Natural killer cell (primary cell): ENCODE measurements at regions of chr3 and their contacts with region 1.

Region 1: GRCh38 chr3:128617557-128618397 is 32.8 kb downstream of the RPN1 start:
- DNase-seq: peak; percentile 99 to 100
- ATAC-seq: peak; percentile 91 to 97 (median 93)
- H3K4me3 ChIP-seq: peak overlapping the region; percentile 90
- H3K4me3 Mint-ChIP-seq: peak overlapping the region; percentile 98
- H3K27ac ChIP-seq: peak overlapping the region; percentile 93
- H3K27ac Mint-ChIP-seq: peak overlapping the region; percentile 91 to 97
- H3K4me1 ChIP-seq: peaks cover 22% of the 10 kb centered on the region
- H3K4me1 Mint-ChIP-seq: peaks cover 25 to 49% of the 10 kb centered on the region in 2 donors
- H3K27me3 ChIP-seq: no peaks in the 10 kb centered on the region
- H3K27me3 Mint-ChIP-seq: no peaks in the 10 kb centered on the region
- CTCF ChIP-seq: peak; percentile 99

Region 2: GRCh38 chr3:127628788-127629466 is 988.9 kb before region 1 on chr3 and contains the start of gene PODXL2:
- intact Hi-C with region 1: no loop called
- DNase-seq: peak; percentile 51 to 71
- ATAC-seq: peak; percentile 56 to 66 (median 66)
- H3K4me3 ChIP-seq: peak within 1 kb of the TSS; percentile 36
- H3K4me3 Mint-ChIP-seq: peak within 1 kb of the TSS; percentile 93
- H3K27ac ChIP-seq: no peak within 1 kb of the TSS
- H3K27ac Mint-ChIP-seq: peak within 1 kb of the TSS; percentile 73 to 87
- H3K4me1 ChIP-seq: peaks cover 29% of the 10 kb centered on the region
- H3K4me1 Mint-ChIP-seq: peaks cover 49 to 61% of the 10 kb centered on the region in 2 donors
- H3K27me3 ChIP-seq: peaks cover 2% of the 10 kb centered on the region
- H3K27me3 Mint-ChIP-seq: peaks cover 17 to 24% of the 10 kb centered on the region in 2 donors
- CTCF ChIP-seq: no peak
- total RNA-seq, gene PODXL2: 2.2 to 3.5 (median 2.7) TPM

Region 3: DNA sequence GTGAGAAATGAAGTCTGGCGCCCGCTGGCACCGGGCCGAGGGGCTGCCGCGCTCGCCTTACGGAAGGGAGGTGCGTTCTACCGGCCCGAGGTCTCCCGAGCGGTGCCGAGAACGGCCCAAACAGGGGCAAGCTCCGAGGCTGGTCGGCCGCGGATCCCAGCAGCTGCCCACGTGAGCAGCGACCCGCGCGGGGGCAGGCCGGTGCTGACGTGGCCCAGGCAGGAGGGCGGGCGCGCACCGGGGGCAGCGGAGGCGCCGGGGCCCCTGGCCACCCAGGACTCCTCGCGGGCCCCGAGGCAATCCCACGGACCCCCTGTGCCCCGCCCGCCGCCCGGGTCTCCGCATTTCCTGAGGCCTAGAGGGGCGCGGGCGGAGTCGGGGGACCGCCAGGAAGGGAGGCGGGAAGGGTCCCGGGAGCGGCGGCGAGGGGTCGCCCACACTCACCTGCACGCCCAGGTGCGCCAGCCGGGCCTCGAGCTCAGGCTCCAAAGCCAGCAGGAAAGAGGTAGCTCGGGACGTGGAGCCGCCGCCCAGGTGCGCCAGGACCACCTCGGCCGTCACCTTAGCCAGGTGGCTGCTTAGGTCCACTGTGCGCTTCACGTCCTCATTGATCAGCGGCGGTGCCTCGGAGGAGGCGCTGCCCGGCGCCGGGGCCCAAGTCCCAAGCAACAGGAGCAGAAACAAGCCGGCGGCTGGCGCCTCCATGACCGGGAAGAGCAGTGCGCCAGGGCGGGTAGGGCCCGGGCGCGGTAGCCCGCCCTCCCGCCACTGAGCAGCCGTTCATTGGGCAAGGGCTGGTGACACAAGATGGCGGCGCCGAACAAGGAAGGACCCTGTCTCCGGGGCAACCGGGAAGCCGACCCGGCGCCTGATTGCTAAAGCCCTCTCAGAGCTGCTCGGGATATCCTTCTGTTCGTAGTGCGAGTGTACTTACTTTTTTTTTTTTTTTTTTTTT is 32.6 kb after region 1 on chr3 and contains the start of gene RPN1:
- intact Hi-C with region 1: loop called (anchors 2 kb)
- DNase-seq: peak; percentile 92 to 97
- ATAC-seq: peak; percentile 94 to 99 (median 98)
- H3K4me3 ChIP-seq: peak within 1 kb of the TSS; percentile 100
- H3K4me3 Mint-ChIP-seq: peak within 1 kb of the TSS; percentile 92
- H3K27ac ChIP-seq: peak within 1 kb of the TSS; percentile 98
- H3K27ac Mint-ChIP-seq: peak within 1 kb of the TSS; percentile 86 to 92
- H3K4me1 ChIP-seq: peaks cover 15% of the 10 kb centered on the region
- H3K4me1 Mint-ChIP-seq: peaks cover 28 to 31% of the 10 kb centered on the region in 2 donors
- H3K27me3 ChIP-seq: no peaks in the 10 kb centered on the region
- H3K27me3 Mint-ChIP-seq: no peaks in the 10 kb centered on the region
- CTCF ChIP-seq: no peak
- total RNA-seq, gene RPN1: 90.5 to 130 (median 92.1) TPM

Region 4: DNA sequence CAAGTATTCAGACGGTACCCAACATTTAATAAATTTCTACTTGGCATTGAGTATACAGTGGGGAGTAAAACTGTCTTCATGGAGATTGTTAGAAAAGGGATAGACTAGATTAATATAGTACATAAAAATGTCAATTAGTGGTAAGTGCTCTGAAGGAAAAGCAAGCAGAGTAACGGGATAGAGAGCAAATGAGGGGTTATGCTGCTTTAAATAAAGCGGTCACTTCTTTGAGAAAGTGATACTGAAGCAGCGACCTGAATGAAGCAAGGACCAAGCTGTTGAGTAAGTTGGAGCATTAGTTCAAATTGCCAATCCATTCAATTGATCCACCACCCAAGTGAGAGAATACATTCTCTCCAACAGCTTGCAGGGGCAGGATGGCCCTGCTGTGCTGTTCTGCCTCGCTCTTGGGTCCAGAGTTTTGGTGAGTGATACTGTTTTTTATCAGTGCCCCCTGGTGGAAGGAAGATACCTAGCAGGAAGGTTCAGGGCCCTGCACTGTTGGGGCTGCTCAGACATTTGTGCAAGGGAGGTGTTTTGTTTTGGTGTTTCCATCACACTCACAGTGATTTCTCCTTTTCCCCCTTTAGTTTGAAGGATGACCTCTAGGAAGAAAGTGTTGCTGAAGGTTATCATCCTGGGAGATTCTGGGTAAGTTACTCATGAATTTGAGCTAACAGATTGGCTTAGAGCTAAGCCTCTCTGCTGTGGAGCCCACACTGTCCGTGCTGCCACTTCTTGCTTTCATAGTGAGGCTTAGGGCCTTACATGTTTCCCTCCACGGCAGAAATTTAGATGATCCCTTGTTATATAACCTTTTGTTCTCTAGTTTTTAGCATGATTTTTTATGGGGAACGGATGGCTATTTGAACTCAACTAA is 177.2 kb after region 1 on chr3:
- intact Hi-C with region 1: loop called (anchors 1 kb)
- DNase-seq: peak; percentile 47 to 87
- ATAC-seq: peak; percentile 98 to 100 (median 99)
- H3K4me3 ChIP-seq: no peak overlapping the region
- H3K4me3 Mint-ChIP-seq: no peak overlapping the region
- H3K27ac ChIP-seq: no peak overlapping the region
- H3K27ac Mint-ChIP-seq: peak overlapping the region; percentile 61 to 72
- H3K4me1 ChIP-seq: peaks cover 18% of the 10 kb centered on the region
- H3K4me1 Mint-ChIP-seq: peaks cover 22 to 45% of the 10 kb centered on the region in 2 donors
- H3K27me3 ChIP-seq: no peaks in the 10 kb centered on the region
- H3K27me3 Mint-ChIP-seq: no peaks in the 10 kb centered on the region
- CTCF ChIP-seq: peak; percentile 74

Region 5: DNA sequence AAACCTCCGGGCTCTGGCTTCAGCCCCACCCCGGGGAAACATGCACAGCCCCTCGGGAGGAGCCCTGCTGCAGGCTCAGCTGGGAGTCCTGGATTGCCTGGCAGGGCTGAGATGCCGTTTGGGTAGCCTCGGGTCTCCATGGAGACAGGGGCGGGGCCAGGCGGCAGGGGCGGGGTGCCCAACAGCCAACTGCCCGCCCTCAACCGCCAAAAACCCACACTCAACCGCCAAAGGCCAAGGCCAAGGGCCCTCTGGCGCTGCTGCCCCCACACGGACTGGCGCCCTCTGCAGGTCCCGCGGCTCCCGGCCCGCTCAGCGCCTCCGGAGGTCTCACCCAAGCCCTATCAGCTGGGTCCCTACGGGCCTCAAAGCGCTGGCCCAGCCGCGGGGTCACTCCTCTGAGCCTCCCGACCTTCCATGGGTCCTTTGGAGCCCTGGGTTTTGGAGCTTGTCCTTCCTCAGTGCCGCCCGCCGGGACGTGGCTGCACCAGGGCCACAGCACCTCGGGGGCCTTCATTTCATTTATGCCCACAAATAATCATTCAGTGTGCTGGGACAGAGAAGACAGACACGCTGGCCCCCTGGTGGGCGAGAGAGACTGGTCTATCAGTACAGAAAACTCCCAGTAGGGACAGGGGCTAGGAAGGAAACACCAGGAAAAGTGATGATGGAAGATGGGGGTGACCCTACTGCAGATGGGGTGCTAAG is 228.2 kb after region 1 on chr3:
- intact Hi-C with region 1: loop called (anchors 1 kb)
- DNase-seq: peak; percentile 73 to 83
- ATAC-seq: peak; percentile 85 to 91 (median 89)
- H3K4me3 ChIP-seq: peak overlapping the region; percentile 38
- H3K4me3 Mint-ChIP-seq: peak overlapping the region; percentile 92
- H3K27ac ChIP-seq: peak overlapping the region; percentile 12
- H3K27ac Mint-ChIP-seq: peak overlapping the region; percentile 62 to 72
- H3K4me1 ChIP-seq: peaks cover 17% of the 10 kb centered on the region
- H3K4me1 Mint-ChIP-seq: peaks cover 12 to 14% of the 10 kb centered on the region in 2 donors
- H3K27me3 ChIP-seq: no peaks in the 10 kb centered on the region
- H3K27me3 Mint-ChIP-seq: no peaks in the 10 kb centered on the region
- CTCF ChIP-seq: peak; percentile 76

Region 6: GRCh38 chr3:128879125-128879969 is 261.6 kb after region 1 on chr3 and contains the start of gene ACAD9:
- intact Hi-C with region 1: loop called (anchors 1 kb)
- DNase-seq: peak; percentile 98 to 99
- ATAC-seq: peak; percentile 90 to 97 (median 95)
- H3K4me3 ChIP-seq: peak within 1 kb of the TSS; percentile 74
- H3K4me3 Mint-ChIP-seq: peak within 1 kb of the TSS; percentile 81
- H3K27ac ChIP-seq: peak within 1 kb of the TSS; percentile 93
- H3K27ac Mint-ChIP-seq: peak within 1 kb of the TSS; percentile 90 to 92
- H3K4me1 ChIP-seq: peaks cover 25% of the 10 kb centered on the region
- H3K4me1 Mint-ChIP-seq: peaks cover 56 to 61% of the 10 kb centered on the region in 2 donors
- H3K27me3 ChIP-seq: no peaks in the 10 kb centered on the region
- H3K27me3 Mint-ChIP-seq: peaks cover 3 to 4% of the 10 kb centered on the region in 2 donors
- CTCF ChIP-seq: no peak
- total RNA-seq, gene ACAD9: 43.4 to 71.3 (median 54.2) TPM

Region 7: GRCh38 chr3:128922804-128923459 is 305.2 kb after region 1 on chr3:
- intact Hi-C with region 1: loop called (anchors 1 kb)
- DNase-seq: peak in 1 of 2 donors; percentile 76
- ATAC-seq: peak; percentile 46 to 57 (median 47)
- H3K4me3 ChIP-seq: no peak overlapping the region
- H3K4me3 Mint-ChIP-seq: peak overlapping the region; percentile 74
- H3K27ac ChIP-seq: no peak overlapping the region
- H3K27ac Mint-ChIP-seq: peak overlapping the region in 1 of 2 donors; percentile 51
- H3K4me1 ChIP-seq: peaks cover 12% of the 10 kb centered on the region
- H3K4me1 Mint-ChIP-seq: peaks cover 15% of the 10 kb centered on the region in 2 donors
- H3K27me3 ChIP-seq: no peaks in the 10 kb centered on the region
- H3K27me3 Mint-ChIP-seq: peaks cover 14 to 20% of the 10 kb centered on the region in 2 donors
- CTCF ChIP-seq: no peak